Tibial artery (tissue), 4 donors: ENCODE measurements at regions of chr2 and their contacts with region 1.

Region 1: DNA sequence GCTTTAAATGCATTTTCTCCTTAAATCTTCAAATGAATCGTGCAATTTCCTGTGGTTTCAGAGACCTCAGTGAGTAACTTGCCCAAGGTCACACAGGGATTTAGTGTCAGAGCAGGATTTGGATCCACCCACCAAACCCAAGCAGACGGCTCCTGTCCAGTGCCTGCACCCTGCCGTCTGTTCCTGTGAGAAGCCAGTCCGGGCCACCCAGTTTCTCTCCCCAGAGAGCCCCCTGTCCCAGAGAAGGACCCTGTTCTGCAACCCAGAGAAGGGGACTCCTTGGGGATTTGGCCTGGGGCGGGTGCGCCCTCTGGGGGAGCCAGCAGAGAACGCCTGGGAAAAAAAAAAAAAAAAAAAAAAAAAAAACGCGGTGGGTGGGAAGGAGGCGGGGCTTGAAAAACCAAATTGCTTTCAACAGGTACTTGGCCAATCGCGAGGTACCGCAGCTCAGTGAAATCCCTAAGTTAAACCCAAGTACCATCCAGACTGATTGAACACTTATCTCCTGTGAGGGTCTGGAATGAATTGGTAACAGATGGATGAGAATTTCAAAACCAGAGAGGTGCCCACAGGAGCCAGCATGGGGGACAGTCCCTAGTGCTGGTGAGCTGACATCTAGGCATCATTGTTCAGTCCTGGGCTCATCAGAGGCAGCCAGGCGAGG is 30.9 kb upstream of the REEP1 start:
- DNase-seq: peak in 1 of 2 donors; percentile 67
- H3K4me3 ChIP-seq: no peak overlapping the region
- H3K27ac ChIP-seq: no peak overlapping the region
- H3K4me1 ChIP-seq: peaks cover 0 to 7% (median 4%) of the 10 kb centered on the region in 4 donors
- H3K27me3 ChIP-seq: no peaks in the 10 kb centered on the region
- CTCF ChIP-seq: peak; percentile 43 to 45

Region 2: GRCh38 chr2:85032621-85033020 is 1335.7 kb before region 1 on chr2:
- intact Hi-C with region 1: no loop called
- DNase-seq: no peak
- H3K4me3 ChIP-seq: no peak overlapping the region
- H3K27ac ChIP-seq: no peak overlapping the region
- H3K4me1 ChIP-seq: peaks cover 0 to 5% (median 0%) of the 10 kb centered on the region in 4 donors
- H3K27me3 ChIP-seq: no peaks in the 10 kb centered on the region
- CTCF ChIP-seq: no peak

Region 3: DNA sequence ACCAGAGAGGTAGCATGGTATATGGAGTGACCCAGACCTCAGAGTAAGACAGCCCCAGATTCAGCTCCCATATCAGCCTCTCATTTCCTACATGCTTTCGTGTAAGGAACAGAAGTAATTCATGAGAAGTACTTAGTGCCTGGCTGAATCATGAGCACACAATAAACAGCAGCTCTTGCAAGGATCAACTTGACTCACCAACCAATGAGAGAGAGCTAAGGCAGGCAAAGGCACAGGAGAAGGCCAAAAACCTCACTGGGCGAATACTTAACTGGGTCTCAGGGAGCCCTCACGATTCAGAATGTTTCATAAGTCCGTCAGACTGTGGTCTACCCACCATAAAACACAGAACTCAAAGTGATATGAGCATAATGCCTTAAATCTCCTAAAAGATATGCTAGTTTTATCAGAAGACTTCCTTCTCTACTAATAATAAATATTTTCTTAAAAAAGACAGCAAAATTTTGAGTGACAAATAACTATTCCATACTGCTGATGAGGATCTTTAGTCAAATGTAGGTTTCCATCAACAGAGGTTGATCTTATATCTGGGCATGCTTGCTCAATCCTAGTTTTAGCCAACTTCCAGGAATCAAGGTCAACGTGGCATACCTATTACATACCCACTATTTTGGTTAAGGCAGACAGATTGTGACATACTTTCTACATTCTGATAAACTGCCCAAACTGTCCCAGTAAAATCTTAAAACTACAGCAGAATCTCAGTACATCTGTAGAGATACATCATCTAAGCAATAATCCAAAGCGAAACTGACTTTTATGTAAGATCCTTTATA is 207.9 kb before region 1 on chr2:
- intact Hi-C with region 1: no loop called
- DNase-seq: no peak
- H3K4me3 ChIP-seq: no peak overlapping the region
- H3K27ac ChIP-seq: no peak overlapping the region
- H3K4me1 ChIP-seq: no peaks in the 10 kb centered on the region
- H3K27me3 ChIP-seq: no peaks in the 10 kb centered on the region
- CTCF ChIP-seq: no peak

Region 4: GRCh38 chr2:86221066-86221684 is 147.1 kb before region 1 on chr2:
- intact Hi-C with region 1: loop called (anchors 2 kb)
- DNase-seq: no peak
- H3K4me3 ChIP-seq: no peak overlapping the region
- H3K27ac ChIP-seq: peak overlapping the region; percentile 91
- H3K4me1 ChIP-seq: peaks cover 0 to 54% (median 41%) of the 10 kb centered on the region in 4 donors
- H3K27me3 ChIP-seq: no peaks in the 10 kb centered on the region
- CTCF ChIP-seq: peak; percentile 62 to 69

Region 5: GRCh38 chr2:86298411-86299379 is 69.6 kb before region 1 on chr2:
- intact Hi-C with region 1: loop called (anchors 10 kb)
- DNase-seq: no peak
- H3K4me3 ChIP-seq: no peak overlapping the region
- H3K27ac ChIP-seq: peak overlapping the region; percentile 77 to 80
- H3K4me1 ChIP-seq: peaks cover 0 to 72% (median 28%) of the 10 kb centered on the region in 4 donors
- H3K27me3 ChIP-seq: no peaks in the 10 kb centered on the region
- CTCF ChIP-seq: peak in 1 of 2 experiments; percentile 42